PC-3 (cell line): ENCODE measurements at regions of chr2 and their contacts with region 1.

Region 1: GRCh38 chr2:45585267-45585861 is 25.7 kb downstream of the SRBD1 start:
- DNase-seq: peak; percentile 72
- ATAC-seq: peak; percentile 74
- H3K4me3 ChIP-seq: no peak overlapping the region
- H3K27ac ChIP-seq: no peak overlapping the region
- H3K4me1 ChIP-seq: no peaks in the 10 kb centered on the region
- H3K27me3 ChIP-seq: no peaks in the 10 kb centered on the region
- CTCF ChIP-seq: peak; percentile 83

Region 2: GRCh38 chr2:45256867-45257641 is 328.3 kb before region 1 on chr2:
- CTCF ChIA-PET with region 1: no interaction called
- POLR2A ChIA-PET with region 1: no interaction called
- intact Hi-C with region 1: no loop called
- DNase-seq: no peak
- ATAC-seq: peak; percentile 49
- H3K4me3 ChIP-seq: no peak overlapping the region
- H3K27ac ChIP-seq: no peak overlapping the region
- H3K4me1 ChIP-seq: peaks cover 51% of the 10 kb centered on the region
- H3K27me3 ChIP-seq: no peaks in the 10 kb centered on the region
- CTCF ChIP-seq: no peak

Region 3: DNA sequence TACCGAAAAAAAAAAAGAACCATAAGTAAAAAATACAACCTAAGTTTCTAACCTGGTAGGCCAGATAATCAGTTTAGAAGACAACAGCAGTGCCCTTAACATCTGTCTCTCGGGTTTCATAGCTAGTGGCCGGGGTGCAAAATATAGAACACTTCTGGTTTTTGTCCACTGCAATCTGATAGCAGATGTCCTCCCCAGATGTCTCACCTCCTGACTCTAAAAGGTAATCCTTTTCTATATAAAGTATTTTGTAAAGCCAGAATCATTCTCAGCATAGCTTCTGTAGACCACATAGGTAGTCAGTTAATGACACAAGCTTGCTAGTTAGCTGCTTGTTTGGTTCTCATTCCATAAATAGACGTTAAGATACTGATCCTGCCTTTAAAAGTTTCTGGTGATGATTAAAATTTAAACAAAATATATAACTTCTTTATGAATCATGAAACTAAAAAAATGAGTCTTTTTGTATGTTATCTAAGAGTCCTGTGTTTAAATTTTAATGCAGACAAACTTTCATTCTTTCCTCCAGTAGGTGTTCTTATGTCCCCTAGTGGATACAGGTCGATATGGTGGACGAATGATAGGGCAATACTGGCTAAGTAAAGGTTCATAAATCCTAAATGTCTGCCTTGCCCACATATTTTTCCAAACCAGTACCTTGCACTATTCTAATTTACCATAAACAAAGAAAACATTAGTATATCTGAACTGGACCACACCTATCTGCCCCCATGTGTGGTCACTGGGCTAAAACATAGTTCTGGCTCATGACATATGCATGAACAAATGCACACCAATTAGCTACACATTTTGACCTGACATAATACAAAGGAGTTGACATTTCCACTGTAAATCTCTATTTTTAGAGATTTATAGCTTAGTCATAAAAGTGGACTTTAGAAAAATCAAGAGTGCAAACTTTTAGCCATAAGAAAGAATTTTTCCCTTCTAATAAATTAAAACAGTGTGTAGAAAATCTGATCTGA is 145.3 kb before region 1 on chr2:
- CTCF ChIA-PET with region 1: no interaction called
- POLR2A ChIA-PET with region 1: no interaction called
- intact Hi-C with region 1: no loop called
- DNase-seq: peak; percentile 59
- ATAC-seq: peak; percentile 76
- H3K4me3 ChIP-seq: no peak overlapping the region
- H3K27ac ChIP-seq: peak overlapping the region; percentile 71
- H3K4me1 ChIP-seq: peaks cover 21% of the 10 kb centered on the region
- H3K27me3 ChIP-seq: no peaks in the 10 kb centered on the region
- CTCF ChIP-seq: peak; percentile 80

Region 4: DNA sequence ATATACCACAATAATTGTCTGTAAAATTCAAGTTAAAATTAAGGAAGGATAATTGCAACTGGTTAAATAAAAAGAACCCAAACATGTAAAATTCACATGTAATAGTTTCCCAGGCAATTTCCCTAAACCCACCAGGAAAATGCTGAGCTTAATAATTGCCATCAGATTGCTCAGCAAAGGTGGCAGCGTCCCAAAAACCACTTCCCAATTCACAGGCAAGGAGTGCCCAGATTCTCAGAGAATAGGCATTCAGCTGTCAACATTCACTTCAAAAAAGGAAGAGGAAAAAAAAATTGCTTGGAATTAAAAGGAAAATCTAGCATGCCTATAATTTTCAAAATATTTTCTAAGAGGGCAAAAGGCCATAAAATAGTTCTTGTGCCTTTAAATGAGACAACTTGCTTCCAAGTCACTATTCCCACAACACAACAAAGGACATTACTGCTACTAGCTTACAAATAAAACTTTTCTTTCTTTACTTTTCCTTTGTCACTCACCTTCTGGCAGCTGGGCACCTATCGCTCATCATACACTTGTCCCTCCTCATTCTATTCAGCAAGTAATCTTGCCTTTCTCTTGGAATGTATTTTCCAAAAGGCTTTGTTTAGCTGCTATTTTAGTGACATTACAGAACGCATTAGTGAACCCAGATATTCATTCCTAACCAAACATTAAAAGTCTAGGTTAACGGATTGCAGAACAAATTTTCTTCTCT is 10.5 kb after region 1 on chr2:
- CTCF ChIA-PET with region 1: interaction called, 13 read pairs
- POLR2A ChIA-PET with region 1: interaction called, 13 read pairs
- intact Hi-C with region 1: loop called (anchors 1 kb)
- DNase-seq: peak; percentile 90
- ATAC-seq: peak; percentile 92
- H3K4me3 ChIP-seq: peak overlapping the region; percentile 18; the same call in 1 of the 2 replicates
- H3K27ac ChIP-seq: peak overlapping the region; percentile 45
- H3K4me1 ChIP-seq: peaks cover 21% of the 10 kb centered on the region
- H3K27me3 ChIP-seq: no peaks in the 10 kb centered on the region
- CTCF ChIP-seq: no peak

Region 5: DNA sequence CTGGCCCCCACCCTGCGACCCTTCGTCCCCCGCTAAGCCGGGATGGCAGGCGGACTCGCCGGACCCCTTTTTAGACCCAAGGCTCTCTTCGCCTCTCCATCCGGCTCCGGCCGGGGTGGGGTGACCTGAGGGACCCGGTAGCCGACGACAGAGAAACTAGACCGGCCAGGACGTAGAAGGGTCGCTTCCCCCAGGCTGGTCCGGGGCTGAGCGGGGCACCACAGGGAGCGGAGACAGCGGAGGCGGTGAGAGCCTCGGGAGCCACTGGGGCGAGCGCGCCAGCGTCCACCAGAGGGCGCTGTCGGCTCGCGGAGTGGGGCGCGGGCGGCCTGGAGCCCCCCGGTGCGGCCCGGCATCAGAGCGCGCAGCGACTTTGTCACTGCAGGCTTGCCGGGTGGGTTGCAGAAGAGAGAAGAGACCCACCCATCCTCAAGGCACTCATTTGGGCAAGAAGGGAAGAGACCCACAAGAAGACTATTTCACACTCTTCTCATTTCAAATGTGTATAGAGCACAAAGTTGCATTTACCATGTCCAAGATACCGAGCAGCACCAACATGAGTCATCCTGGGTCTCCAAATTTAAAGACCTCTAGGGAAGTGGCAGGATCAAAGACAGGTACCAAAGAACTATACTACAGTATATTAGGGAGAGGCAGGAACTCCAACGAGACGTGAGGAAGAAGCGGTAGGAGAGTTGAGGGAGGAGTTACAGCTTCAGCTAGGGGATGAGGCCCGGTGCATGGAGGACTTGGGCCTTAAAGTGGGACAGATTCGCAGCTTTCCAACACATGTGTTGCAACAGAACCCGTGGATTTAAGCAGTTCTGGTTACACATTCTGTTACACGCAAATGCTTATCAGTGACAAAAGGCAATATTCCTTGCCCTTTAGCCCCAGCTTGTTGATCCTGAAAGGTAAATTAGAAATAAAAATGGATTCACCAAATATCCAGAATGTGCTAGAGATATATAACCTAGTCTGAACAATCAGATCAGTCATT is 58.5 kb after region 1 on chr2:
- CTCF ChIA-PET with region 1: no interaction called
- POLR2A ChIA-PET with region 1: no interaction called
- intact Hi-C with region 1: loop called (anchors 1 kb)
- DNase-seq: peak; percentile 84
- ATAC-seq: peak; percentile 99
- H3K4me3 ChIP-seq: peak overlapping the region; percentile 80
- H3K27ac ChIP-seq: no peak overlapping the region
- H3K4me1 ChIP-seq: 0 out of 2 replicates have a peak, but pooled peaks cover 4% of the 10 kb centered on the region
- H3K27me3 ChIP-seq: no peaks in the 10 kb centered on the region
- CTCF ChIP-seq: peak; percentile 95

Region 6: GRCh38 chr2:46062637-46063412 is 477.5 kb after region 1 on chr2:
- CTCF ChIA-PET with region 1: no interaction called
- POLR2A ChIA-PET with region 1: no interaction called
- intact Hi-C with region 1: no loop called
- DNase-seq: peak; percentile 92
- ATAC-seq: peak; percentile 73
- H3K4me3 ChIP-seq: no peak overlapping the region
- H3K27ac ChIP-seq: no peak overlapping the region
- H3K4me1 ChIP-seq: peaks cover 19% of the 10 kb centered on the region; the same call in 1 of the 2 replicates
- H3K27me3 ChIP-seq: no peaks in the 10 kb centered on the region
- CTCF ChIP-seq: peak; percentile 92